ENCODE measurements at regions of chr12 and their contacts with region 1.

Region 1: GRCh38 chr12:40107098-40107802 is 1.4 kb upstream of the SLC2A13 start:
- DNase-seq: peak; percentile 78 to 95 (median 88)
- ATAC-seq: peak; percentile 44
- H3K4me3 ChIP-seq: peak overlapping the region; percentile 63
- H3K4me3 Mint-ChIP-seq: peak overlapping the region; percentile 87
- H3K27ac ChIP-seq: no peak overlapping the region
- H3K27ac Mint-ChIP-seq: peak overlapping the region; percentile 57
- H3K4me1 ChIP-seq: peaks cover 27% of the 10 kb centered on the region
- H3K4me1 Mint-ChIP-seq: peaks cover 32% of the 10 kb centered on the region
- H3K27me3 ChIP-seq: peaks cover 0 to 9% of the 10 kb centered on the region in 2 experiments
- H3K27me3 Mint-ChIP-seq: peaks cover 8% of the 10 kb centered on the region
- CTCF ChIP-seq: peak; percentile 91

Region 2: DNA sequence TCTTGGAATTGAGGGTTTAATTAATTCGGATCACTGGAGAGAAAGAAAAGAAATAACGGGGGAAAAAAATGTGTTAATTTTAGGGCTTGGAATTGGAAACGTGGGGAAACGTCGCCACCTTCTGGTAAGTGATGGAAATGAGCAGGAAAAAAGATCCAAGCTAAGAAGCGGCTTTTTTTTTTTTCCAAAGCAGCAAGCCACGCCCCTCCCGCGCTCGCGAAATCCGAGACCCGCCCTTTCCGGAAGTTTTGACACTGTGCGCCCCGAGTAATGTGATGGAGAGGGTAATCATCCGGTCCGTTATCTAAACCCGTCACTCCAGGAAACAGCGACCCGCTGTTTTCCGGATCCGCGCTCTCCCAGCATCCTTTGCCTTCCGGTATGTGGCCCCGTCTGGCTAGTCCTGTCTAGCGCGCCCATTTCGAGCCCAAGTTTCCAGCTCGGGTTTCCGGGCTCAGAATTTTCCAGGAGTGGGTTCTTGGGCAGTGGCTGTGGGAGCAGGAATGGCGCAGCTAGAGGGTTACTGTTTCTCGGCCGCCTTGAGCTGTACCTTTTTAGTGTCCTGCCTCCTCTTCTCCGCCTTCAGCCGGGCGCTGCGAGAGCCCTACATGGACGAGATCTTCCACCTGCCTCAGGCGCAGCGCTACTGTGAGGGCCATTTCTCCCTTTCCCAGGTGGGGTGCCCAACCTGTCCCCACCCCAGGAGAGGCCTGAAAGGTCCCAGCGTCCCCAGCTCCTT is 1790.7 kb before region 1 on chr12 and contains the start of gene ALG10B:
- CTCF ChIA-PET with region 1: no interaction called
- POLR2A ChIA-PET with region 1: no interaction called
- intact Hi-C with region 1: loop called in 1 of 2 experiments (anchors 10 kb)
- DNase-seq: peak; percentile 86 to 97 (median 90)
- ATAC-seq: peak; percentile 97
- H3K4me3 ChIP-seq: peak within 1 kb of the TSS; percentile 89
- H3K4me3 Mint-ChIP-seq: peak within 1 kb of the TSS; percentile 90
- H3K27ac ChIP-seq: peak within 1 kb of the TSS; percentile 80 to 96
- H3K27ac Mint-ChIP-seq: peak within 1 kb of the TSS; percentile 95
- H3K4me1 ChIP-seq: peaks cover 10% of the 10 kb centered on the region
- H3K4me1 Mint-ChIP-seq: peaks cover 39% of the 10 kb centered on the region
- H3K27me3 ChIP-seq: no peaks in the 10 kb centered on the region
- H3K27me3 Mint-ChIP-seq: no peaks in the 10 kb centered on the region
- CTCF ChIP-seq: peak; percentile 80
- total RNA-seq, gene ALG10B: 6.6 to 10.1 TPM

Region 3: DNA sequence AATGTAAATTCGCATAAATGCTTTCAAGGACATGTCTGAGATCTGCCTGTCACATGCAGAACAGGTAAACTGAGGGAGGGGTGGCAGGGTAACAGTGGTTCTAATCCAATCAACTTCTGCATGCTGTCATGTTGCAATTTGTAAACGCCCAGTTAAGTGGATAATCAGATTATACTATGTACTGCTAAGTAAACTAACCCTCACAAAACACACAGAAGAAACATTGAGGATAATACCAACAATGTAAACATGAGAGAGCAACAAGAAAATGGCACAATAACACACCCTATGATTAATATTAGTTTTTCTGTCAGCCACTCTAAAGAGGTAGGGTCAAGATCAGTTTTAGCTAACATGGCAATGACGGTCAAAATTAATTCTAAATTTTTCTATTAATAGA is 788.1 kb before region 1 on chr12:
- CTCF ChIA-PET with region 1: no interaction called
- POLR2A ChIA-PET with region 1: no interaction called
- intact Hi-C with region 1: loop called (anchors 1 to 5 kb)
- DNase-seq: no peak
- ATAC-seq: no peak
- H3K4me3 ChIP-seq: no peak overlapping the region
- H3K4me3 Mint-ChIP-seq: no peak overlapping the region
- H3K27ac ChIP-seq: no peak overlapping the region
- H3K27ac Mint-ChIP-seq: no peak overlapping the region
- H3K4me1 ChIP-seq: no peaks in the 10 kb centered on the region
- H3K4me1 Mint-ChIP-seq: no peaks in the 10 kb centered on the region
- H3K27me3 ChIP-seq: no peaks in the 10 kb centered on the region
- H3K27me3 Mint-ChIP-seq: no peaks in the 10 kb centered on the region
- CTCF ChIP-seq: no peak

Region 4: GRCh38 chr12:39587225-39587624 is 520.0 kb before region 1 on chr12:
- CTCF ChIA-PET with region 1: no interaction called
- POLR2A ChIA-PET with region 1: no interaction called
- intact Hi-C with region 1: loop called in 1 of 2 experiments (anchors 2 kb)
- DNase-seq: peak in 9 of 14 experiments; percentile 3 to 68 (median 16)
- ATAC-seq: peak; percentile 73
- H3K4me3 ChIP-seq: no peak overlapping the region
- H3K4me3 Mint-ChIP-seq: no peak overlapping the region
- H3K27ac ChIP-seq: no peak overlapping the region
- H3K27ac Mint-ChIP-seq: no peak overlapping the region
- H3K4me1 ChIP-seq: no peaks in the 10 kb centered on the region
- H3K4me1 Mint-ChIP-seq: no peaks in the 10 kb centered on the region
- H3K27me3 ChIP-seq: no peaks in the 10 kb centered on the region
- H3K27me3 Mint-ChIP-seq: no peaks in the 10 kb centered on the region
- CTCF ChIP-seq: peak; percentile 76

Region 5: GRCh38 chr12:39692258-39692853 is 414.9 kb before region 1 on chr12:
- CTCF ChIA-PET with region 1: interaction called, 4 read pairs
- POLR2A ChIA-PET with region 1: no interaction called
- intact Hi-C with region 1: loop called in 1 of 2 experiments (anchors 5 kb)
- DNase-seq: peak in 3 of 14 experiments; percentile 32 to 62 (median 33)
- ATAC-seq: peak; percentile 37
- H3K4me3 ChIP-seq: no peak overlapping the region
- H3K4me3 Mint-ChIP-seq: no peak overlapping the region
- H3K27ac ChIP-seq: no peak overlapping the region
- H3K27ac Mint-ChIP-seq: no peak overlapping the region
- H3K4me1 ChIP-seq: no peaks in the 10 kb centered on the region
- H3K4me1 Mint-ChIP-seq: peaks cover 4% of the 10 kb centered on the region
- H3K27me3 ChIP-seq: no peaks in the 10 kb centered on the region
- H3K27me3 Mint-ChIP-seq: peaks cover 11% of the 10 kb centered on the region
- CTCF ChIP-seq: peak; percentile 76

Region 6: DNA sequence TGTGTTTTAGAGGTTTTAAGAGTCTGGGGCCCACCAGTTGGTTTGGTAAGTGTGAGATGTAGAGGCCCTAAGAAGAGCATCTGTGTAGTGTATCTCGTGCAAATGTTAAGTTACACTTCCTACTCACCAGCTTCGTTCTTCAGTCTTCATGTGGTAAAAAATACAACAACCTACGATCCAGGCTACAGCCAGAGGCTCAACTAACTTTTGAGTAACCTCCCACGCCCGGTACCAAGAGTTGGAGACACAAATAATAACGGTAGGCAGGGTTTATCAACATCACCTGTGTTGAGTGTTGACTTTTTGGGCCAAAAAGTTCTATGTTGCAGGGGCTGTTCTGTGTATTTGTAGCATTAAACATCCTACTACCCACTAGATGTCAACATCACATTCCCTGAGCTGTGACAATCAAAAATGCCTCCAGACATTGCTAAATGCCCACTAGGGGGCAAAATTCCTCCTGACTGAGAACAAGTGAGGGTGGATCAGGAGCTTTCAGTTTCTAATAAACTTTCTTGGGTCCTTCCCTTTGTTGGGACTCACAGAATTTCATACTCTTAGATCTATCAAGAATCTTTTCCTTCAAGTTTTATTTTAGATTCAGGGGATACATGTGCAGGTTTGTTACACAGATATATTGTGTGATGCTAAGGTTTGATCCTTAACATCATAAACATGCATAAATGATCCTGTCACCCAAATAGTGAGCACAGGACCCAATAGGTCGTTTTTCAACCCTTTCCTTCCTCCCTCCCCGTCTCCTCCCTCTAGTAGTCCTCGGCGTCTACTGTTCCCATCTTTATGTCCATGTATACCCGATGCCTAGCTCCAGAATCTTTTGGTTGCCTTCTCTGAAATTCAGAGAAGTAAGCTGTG is 96.1 kb before region 1 on chr12:
- CTCF ChIA-PET with region 1: interaction called, 34 read pairs
- POLR2A ChIA-PET with region 1: interaction called, 14 read pairs
- intact Hi-C with region 1: loop called (anchors 1 kb)
- DNase-seq: peak in 12 of 14 experiments; percentile 11 to 80 (median 44)
- ATAC-seq: peak; percentile 91
- H3K4me3 ChIP-seq: peak overlapping the region; percentile 19
- H3K4me3 Mint-ChIP-seq: peak overlapping the region; percentile 47
- H3K27ac ChIP-seq: no peak overlapping the region
- H3K27ac Mint-ChIP-seq: no peak overlapping the region
- H3K4me1 ChIP-seq: no peaks in the 10 kb centered on the region
- H3K4me1 Mint-ChIP-seq: peaks cover 10% of the 10 kb centered on the region
- H3K27me3 ChIP-seq: no peaks in the 10 kb centered on the region
- H3K27me3 Mint-ChIP-seq: no peaks in the 10 kb centered on the region
- CTCF ChIP-seq: peak; percentile 84

Region 7: DNA sequence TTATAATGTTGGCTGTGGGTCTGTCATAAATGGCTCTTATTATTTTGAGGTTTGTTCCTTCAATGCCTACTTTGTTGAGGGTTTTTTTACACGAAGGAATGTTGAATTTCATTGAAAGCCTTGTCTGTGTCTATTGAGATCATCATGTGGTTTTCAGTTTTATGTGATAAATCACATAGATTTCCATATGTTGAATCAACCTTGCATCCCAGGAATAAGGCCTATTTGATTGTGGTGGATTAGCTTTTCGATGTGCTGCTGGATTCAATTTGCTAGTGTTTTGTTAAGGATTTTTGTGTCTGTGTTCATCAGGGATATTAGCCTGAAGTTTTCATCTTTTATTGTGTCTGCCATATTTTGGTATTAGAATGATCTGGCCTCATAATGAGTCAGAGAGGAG is 29.0 kb before region 1 on chr12:
- CTCF ChIA-PET with region 1: no interaction called
- POLR2A ChIA-PET with region 1: no interaction called
- intact Hi-C with region 1: no loop called
- DNase-seq: no peak
- ATAC-seq: no peak
- H3K4me3 ChIP-seq: no peak overlapping the region
- H3K4me3 Mint-ChIP-seq: no peak overlapping the region
- H3K27ac ChIP-seq: no peak overlapping the region
- H3K27ac Mint-ChIP-seq: no peak overlapping the region
- H3K4me1 ChIP-seq: no peaks in the 10 kb centered on the region
- H3K4me1 Mint-ChIP-seq: no peaks in the 10 kb centered on the region
- H3K27me3 ChIP-seq: no peaks in the 10 kb centered on the region
- H3K27me3 Mint-ChIP-seq: peaks cover 12% of the 10 kb centered on the region
- CTCF ChIP-seq: no peak